ENCODE measurements at regions of chr6 and their contacts with region 1.

Region 1: DNA sequence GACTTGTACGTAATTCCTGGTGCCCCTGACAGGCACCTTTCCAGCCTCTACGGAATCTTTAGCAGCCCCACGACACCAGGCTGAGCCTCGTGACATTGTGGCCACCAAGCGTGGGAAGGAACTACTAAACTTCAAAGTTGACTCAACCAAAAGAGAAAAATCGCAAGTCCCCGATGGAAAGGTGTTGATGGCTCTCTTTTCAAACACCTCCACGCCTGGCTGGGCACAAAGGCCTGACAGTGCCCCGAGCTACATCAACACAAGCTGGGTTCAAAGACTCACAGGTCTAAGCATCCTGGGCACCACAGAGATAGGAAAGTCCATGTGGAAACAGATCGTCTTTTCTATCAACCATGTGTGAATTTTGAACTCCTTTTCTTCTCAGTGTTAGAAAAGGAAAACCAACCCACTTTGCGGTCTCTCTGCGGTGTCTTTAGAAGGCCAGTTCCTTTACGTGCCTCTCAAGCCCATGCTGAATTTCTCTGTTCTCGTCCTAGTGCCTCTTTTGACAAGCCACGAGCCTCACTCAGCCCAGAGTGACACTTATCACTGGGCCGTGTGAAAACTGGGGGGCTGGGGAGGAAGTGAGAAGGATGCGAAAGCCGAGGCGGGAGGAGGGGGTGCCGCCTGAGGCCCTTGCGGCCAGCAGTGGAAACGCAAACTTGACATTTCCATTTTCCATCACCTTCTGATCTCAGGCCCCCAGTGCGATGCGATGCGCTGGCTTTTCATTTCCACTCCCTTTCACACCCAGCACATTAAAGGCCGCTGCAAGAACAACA is 59.4 kb downstream of the GFOD1 start:
- DNase-seq: peak; percentile 88
- H3K4me3 Mint-ChIP-seq: peak overlapping the region; percentile 53
- H3K27ac Mint-ChIP-seq: peak overlapping the region; percentile 86
- H3K4me1 Mint-ChIP-seq: peaks cover 66% of the 10 kb centered on the region
- H3K27me3 Mint-ChIP-seq: no peaks in the 10 kb centered on the region

Region 2: DNA sequence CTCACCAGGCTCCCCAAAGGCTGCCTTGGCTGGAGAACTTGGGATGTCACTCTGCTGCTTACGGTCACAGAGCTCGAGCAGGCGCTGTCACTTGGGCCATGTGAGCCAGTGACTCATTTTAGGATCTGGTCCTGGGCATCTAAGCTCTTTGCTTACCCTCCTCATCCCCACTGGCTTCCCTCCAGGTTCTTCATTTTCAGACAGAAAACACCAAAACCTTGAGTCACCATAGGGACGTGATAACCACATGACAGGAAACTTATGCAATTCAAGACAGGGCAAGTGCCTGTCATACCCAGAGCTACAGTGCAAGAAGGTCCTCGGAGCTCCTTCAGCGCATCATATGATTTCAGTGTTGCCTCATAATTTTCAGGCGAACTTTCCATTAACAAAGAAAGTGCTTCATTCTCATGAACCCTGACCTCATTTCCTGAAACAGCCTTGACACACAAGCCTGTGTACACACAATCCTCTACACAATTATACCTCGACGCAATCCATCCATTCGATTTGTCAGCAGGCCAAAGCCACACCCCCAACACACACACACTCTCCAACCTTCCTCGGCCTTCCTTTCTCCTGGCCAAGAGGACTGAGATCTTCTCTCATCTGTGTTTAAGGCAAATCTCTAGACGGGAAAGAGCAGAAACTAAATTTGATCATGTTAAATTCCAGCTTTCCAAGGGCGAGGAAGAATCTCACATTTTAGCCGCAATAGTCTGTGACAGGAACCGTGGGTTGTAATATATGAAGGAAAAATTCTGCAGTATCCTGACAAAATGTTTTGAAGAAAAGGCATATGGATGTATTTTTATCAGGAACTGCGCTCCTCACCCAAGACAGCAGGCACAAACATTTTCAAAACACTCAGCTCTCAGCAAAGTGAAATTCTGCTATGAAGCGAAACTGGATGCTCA is 125.0 kb before region 1 on chr6:
- CTCF ChIA-PET with region 1: no interaction called
- POLR2A ChIA-PET with region 1: interaction called, 3 read pairs
- intact Hi-C with region 1: loop called (anchors 1 kb)
- DNase-seq: peak; percentile 74
- H3K4me3 Mint-ChIP-seq: peak overlapping the region; percentile 24
- H3K27ac Mint-ChIP-seq: peak overlapping the region; percentile 83
- H3K4me1 Mint-ChIP-seq: peaks cover 27% of the 10 kb centered on the region
- H3K27me3 Mint-ChIP-seq: no peaks in the 10 kb centered on the region

Region 3: DNA sequence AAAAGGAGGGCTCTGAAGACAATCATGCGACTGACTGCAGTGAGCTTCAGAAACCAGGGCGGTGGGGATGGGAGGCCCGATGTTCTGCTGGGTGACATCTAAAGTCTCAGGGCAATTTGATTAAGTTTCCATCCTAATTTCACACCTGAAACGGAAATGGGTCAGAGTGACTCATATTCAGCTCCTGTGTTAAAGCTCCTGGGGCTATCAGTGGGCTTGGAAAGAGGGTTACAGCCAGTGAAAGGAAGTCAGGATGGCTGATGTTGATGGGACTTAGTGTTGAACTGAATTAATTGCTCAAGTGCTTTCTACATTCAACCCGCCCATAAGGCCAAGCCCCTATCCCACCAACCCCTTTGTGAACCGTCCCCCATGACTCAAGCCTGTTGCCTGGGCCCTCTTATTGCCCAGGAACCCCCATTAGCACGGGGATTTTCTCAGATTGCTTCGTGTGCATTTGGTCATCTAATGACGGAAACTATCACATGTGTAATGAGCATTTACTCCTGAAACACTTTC is 52.6 kb before region 1 on chr6:
- CTCF ChIA-PET with region 1: interaction called, 3 read pairs
- POLR2A ChIA-PET with region 1: interaction called, 6 read pairs
- intact Hi-C with region 1: loop called (anchors 1 kb)
- DNase-seq: peak; percentile 72
- H3K4me3 Mint-ChIP-seq: no peak overlapping the region
- H3K27ac Mint-ChIP-seq: no peak overlapping the region
- H3K4me1 Mint-ChIP-seq: peaks cover 20% of the 10 kb centered on the region
- H3K27me3 Mint-ChIP-seq: no peaks in the 10 kb centered on the region

Region 4: DNA sequence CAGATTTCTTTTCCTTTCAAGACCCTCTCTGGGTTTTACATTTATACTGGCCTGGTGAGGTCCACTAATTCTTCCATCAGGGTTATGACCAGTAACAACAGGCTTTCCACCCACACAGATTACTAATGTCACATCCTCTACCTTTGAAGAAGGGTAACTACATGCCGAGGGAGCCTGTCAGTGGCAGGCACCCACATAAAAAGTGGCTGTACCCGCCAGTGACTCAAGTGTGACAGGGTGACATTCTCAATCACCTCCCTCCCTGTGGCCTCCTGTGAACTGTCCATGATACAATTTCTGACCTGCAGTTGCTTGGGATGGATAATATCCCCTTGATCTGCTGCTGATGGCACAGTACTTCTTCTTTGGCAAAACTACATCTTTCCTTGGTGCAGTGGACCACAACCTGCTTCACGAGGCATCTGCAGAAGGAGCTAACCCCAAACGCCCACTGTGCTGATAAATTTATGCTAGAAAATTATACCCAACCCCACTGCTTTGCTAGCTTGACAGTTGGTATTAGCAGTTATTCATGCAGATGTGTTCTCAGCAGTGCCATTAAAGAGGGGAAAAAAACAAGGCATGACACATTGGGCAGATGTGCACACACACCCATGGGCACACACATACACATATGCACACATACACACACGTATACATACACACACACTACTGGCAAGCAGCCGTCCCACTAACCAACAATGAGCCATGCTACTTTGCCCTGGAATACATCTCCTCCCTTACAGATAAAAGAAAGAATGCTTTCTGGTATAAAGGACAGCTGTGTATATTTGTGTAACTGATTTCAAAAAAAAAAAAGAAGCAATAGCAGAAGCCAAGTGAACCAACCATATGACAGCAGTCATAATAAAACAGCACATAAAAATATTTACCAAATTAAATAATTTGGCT is 38.6 kb after region 1 on chr6:
- CTCF ChIA-PET with region 1: no interaction called
- POLR2A ChIA-PET with region 1: no interaction called
- intact Hi-C with region 1: loop called (anchors 1 kb)
- DNase-seq: peak; percentile 81
- H3K4me3 Mint-ChIP-seq: peak overlapping the region; percentile 42
- H3K27ac Mint-ChIP-seq: peak overlapping the region; percentile 86
- H3K4me1 Mint-ChIP-seq: peaks cover 34% of the 10 kb centered on the region
- H3K27me3 Mint-ChIP-seq: no peaks in the 10 kb centered on the region

Region 5: GRCh38 chr6:14542670-14543366 is 1114.8 kb after region 1 on chr6:
- CTCF ChIA-PET with region 1: no interaction called
- POLR2A ChIA-PET with region 1: no interaction called
- intact Hi-C with region 1: loop called (anchors 5 kb)
- DNase-seq: peak; percentile 90
- H3K4me3 Mint-ChIP-seq: no peak overlapping the region
- H3K27ac Mint-ChIP-seq: peak overlapping the region; percentile 53
- H3K4me1 Mint-ChIP-seq: peaks cover 31% of the 10 kb centered on the region
- H3K27me3 Mint-ChIP-seq: peaks cover 2% of the 10 kb centered on the region